H1 (cell line): ENCODE measurements at regions of chr9 and their contacts with region 1.

Region 1: DNA sequence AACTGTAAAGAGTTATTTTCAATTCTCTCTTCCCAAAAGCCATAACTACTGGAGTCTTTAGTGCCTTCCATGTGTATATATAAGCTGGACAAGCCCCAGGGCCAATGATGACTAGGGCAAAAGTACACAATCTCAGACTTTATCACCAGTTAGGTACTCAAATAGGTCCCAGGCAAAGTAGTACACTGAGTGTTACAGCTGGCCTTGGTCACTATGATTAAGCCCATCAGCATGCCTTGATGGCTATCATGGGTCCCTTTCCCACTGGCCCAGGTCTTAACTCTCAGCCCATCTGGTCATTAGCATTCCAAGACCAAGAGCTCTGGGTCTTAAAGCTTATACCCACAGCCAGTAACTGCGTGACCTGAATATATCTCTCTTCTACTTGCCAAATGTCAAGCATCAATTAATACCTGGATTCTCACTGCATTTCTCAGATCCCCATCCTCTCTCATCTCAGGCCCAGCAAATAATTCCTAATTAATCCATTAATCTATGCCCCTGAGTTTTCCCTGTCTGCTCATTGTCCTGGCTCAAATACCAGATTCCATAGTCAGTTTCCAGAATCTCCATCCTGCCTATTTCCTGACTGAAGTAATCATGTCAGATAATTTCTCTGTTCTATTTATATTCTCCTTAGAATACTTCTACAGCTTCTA is 62.3 kb downstream of the NR6A1 start:
- DNase-seq: no peak
- H3K4me3 ChIP-seq: no peak overlapping the region
- H3K27ac ChIP-seq: no peak overlapping the region
- H3K4me1 ChIP-seq: peaks cover 2 to 16% (median 7%) of the 10 kb centered on the region in 4 experiments; a peak in 5 of 7 replicates
- H3K27me3 ChIP-seq: no peaks in the 10 kb centered on the region
- CTCF ChIP-seq: no peak
- EP300 ChIP-seq: no peak
- POLR2A ChIP-seq: no peak
- RAD21 ChIP-seq: no peak

Region 2: GRCh38 chr9:124551472-124552272 is 157.1 kb before region 1 on chr9:
- CTCF ChIA-PET with region 1: interaction called, 128 read pairs
- POLR2A ChIA-PET with region 1: no interaction called
- DNase-seq: peak; percentile 56 to 78
- H3K4me3 ChIP-seq: no peak overlapping the region
- H3K27ac ChIP-seq: no peak overlapping the region
- H3K4me1 ChIP-seq: peaks cover 3 to 8% (median 5%) of the 10 kb centered on the region in 4 experiments; a peak in 5 of 7 replicates
- H3K27me3 ChIP-seq: no peaks in the 10 kb centered on the region
- CTCF ChIP-seq: peak; percentile 86 to 95 (median 93)
- EP300 ChIP-seq: no peak
- POLR2A ChIP-seq: no peak
- RAD21 ChIP-seq: peak; percentile 94 to 98

Region 3: DNA sequence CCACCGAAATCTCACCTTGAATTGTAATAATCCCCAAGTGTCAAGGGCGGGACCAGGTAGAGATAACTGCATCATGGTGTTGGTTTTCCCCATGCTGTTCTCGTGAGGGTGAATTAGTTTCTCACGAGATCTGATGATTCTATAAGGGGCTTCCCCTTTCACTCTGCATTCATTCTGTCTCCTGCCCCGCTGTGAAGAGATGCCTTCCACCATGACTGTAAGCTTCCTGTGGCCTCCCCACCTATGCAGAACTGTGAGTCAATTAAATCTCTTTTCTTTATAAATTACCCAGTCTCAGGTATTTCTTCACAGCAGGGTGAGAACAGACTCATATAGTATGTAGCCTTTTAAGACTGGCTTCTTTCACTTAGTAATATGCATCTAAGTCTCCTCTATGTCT is 73.5 kb before region 1 on chr9:
- CTCF ChIA-PET with region 1: interaction called, 13 read pairs
- POLR2A ChIA-PET with region 1: no interaction called
- DNase-seq: no peak
- H3K4me3 ChIP-seq: no peak overlapping the region
- H3K27ac ChIP-seq: no peak overlapping the region
- H3K4me1 ChIP-seq: peaks cover 0 to 3% (median 0%) of the 10 kb centered on the region in 4 experiments; a peak in 2 of 7 replicates
- H3K27me3 ChIP-seq: no peaks in the 10 kb centered on the region
- CTCF ChIP-seq: no peak
- EP300 ChIP-seq: no peak
- POLR2A ChIP-seq: no peak
- RAD21 ChIP-seq: no peak

Region 4: DNA sequence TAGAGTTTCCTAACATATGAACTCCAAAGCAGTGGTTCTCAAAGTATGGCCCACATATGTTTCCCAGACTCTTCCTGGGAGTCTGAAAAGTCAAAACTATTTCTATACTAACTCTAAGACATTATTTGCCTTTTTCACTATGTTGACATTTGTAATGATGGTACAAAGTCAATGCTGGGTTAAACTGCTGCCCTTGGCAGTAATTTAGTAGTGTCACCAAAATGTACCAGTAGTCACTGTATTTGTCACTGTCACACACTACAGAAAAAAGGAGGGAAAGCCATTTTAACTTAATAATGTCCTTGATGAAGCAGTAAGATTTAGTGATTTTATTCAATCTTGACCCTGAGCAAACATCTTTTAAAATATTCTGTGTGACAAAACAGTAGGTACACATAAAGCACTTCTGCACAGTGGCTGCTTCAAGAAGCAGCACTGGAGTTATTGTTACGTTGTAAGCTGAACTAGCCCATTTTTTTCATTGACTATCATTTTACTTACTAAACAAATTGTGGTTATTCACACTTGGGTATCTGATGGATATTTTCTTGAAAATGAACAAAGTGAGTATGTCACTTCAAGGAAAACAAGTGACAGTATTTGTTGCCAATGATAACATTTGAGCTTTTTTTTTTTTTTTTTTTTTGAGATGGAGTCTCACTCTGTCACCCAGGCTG is 27.9 kb before region 1 on chr9:
- CTCF ChIA-PET with region 1: interaction called, 16 read pairs
- POLR2A ChIA-PET with region 1: no interaction called
- DNase-seq: no peak
- H3K4me3 ChIP-seq: no peak overlapping the region
- H3K27ac ChIP-seq: no peak overlapping the region
- H3K4me1 ChIP-seq: no peaks in the 10 kb centered on the region
- H3K27me3 ChIP-seq: no peaks in the 10 kb centered on the region
- CTCF ChIP-seq: no peak
- EP300 ChIP-seq: no peak
- POLR2A ChIP-seq: no peak
- RAD21 ChIP-seq: no peak

Region 5: GRCh38 chr9:124721109-124721906 is 12.5 kb after region 1 on chr9:
- CTCF ChIA-PET with region 1: interaction called, 21 read pairs
- POLR2A ChIA-PET with region 1: interaction called, 3 read pairs
- DNase-seq: no peak
- H3K4me3 ChIP-seq: no peak overlapping the region
- H3K27ac ChIP-seq: no peak overlapping the region
- H3K4me1 ChIP-seq: peaks cover 0 to 5% (median 1%) of the 10 kb centered on the region in 4 experiments; a peak in 2 of 7 replicates
- H3K27me3 ChIP-seq: no peaks in the 10 kb centered on the region
- CTCF ChIP-seq: no peak
- EP300 ChIP-seq: no peak
- POLR2A ChIP-seq: no peak
- RAD21 ChIP-seq: no peak

Region 6: DNA sequence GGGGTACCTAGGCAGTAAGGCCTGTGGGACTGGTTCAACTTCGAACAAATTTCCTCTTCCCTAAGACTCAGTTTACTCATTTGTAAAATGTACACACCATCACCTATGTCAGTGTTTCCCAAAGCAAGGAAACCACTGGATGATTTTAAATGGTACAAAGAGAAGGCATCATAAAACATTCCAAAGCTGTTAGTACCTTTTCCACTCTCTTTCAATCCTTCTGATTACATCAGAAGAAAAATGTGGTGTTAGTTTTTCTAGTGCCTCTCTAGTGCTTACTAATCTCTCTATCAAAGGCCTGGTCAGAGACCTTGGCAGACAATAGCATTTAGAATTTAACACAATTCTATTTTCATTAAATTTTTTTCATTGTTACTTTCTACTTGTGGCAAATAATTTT is 44.2 kb after region 1 on chr9:
- CTCF ChIA-PET with region 1: interaction called, 15 read pairs
- POLR2A ChIA-PET with region 1: no interaction called
- DNase-seq: no peak
- H3K4me3 ChIP-seq: no peak overlapping the region; a peak in 1 of 8 replicates
- H3K27ac ChIP-seq: no peak overlapping the region
- H3K4me1 ChIP-seq: peaks cover 6 to 29% (median 12%) of the 10 kb centered on the region in 4 experiments
- H3K27me3 ChIP-seq: no peaks in the 10 kb centered on the region
- CTCF ChIP-seq: no peak
- EP300 ChIP-seq: no peak
- POLR2A ChIP-seq: no peak
- RAD21 ChIP-seq: no peak

Region 7: DNA sequence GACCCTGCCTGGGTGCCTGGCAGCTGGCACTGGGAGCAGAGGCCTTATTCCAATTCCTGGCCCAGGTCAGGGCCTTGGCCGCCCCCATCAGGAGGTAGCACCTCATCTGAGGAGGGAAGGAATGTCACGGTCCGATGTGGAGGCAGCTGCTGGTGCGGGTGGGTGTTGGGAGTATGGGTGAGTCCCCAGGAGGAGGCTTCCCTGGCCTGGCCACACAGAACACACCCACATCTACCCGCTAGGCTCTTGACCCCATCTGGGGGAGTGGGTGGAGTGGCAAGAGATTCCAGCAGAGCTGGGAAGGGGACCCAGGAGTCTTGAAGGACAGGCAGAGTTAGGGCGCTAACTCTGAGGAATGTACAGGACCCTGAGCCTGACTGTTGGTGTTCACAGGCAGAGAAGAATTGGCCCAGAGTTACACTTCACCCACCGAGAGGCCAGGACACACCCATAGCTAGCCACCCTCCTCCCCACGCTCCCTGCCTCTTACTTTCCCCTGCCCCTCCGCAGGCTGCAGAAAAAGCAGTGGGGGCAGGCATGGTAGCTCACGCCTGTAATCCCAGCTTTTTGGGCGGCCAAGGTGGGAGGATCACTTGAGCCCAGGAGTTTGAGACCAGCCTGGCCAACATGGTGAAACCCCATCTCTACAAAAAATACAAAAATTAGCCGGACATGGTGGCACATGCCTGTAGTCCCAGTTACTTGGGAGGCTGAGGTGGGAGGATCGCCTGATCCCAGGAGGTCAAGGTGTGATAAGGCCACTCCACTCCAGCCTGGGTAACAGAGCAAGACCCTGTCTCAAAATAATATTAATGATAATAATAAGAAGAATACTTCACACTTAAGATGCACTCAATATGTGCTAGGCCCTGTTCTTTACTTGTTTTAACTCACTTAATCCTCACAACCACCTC is 74.2 kb after region 1 on chr9:
- CTCF ChIA-PET with region 1: no interaction called
- POLR2A ChIA-PET with region 1: no interaction called
- DNase-seq: peak in 1 of 2 experiments; percentile 48
- H3K4me3 ChIP-seq: no peak overlapping the region
- H3K27ac ChIP-seq: no peak overlapping the region
- H3K4me1 ChIP-seq: peaks cover 8 to 16% (median 13%) of the 10 kb centered on the region in 4 experiments
- H3K27me3 ChIP-seq: no peaks in the 10 kb centered on the region; a peak in 1 of 7 replicates
- CTCF ChIP-seq: no peak
- EP300 ChIP-seq: no peak
- POLR2A ChIP-seq: no peak
- RAD21 ChIP-seq: no peak; a peak in 1 of 4 replicates

Region 8: DNA sequence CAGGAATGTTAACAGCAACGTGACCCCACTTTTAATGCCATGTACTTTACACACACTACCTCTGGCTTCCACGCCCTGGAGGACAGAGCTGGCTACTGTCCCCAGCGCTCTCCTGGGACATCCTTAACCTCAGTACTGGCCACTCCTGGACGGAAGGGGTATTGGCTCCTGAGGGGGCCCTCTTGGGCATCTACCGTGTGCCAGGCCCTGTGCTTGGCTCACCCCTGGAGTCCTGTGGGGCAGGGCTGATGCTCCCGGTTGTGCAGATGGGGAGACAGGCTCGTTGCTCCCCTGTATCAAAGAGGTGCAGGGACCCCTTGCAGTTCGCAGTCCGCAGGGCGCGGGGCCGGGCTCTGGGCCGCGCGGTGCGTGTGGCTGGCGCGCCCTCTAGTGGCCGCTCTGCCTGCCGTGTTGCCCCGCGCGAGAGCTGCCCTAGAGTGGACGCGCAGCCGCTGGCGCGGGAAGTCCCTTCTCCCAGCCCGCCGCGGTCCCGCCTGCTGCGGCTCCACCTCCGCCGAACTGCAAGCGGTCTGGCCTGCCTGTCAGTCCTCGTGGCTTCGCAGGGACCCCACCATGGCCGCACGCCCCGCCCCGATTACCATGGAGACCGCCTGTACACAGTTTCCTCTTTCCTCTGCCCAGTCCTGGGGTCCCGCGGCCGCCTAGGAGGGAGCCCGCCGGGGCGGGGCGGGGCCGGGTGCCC is 144.2 kb after region 1 on chr9 and contains the start of gene WDR38:
- CTCF ChIA-PET with region 1: interaction called, 12 read pairs
- POLR2A ChIA-PET with region 1: no interaction called
- DNase-seq: peak in 1 of 2 experiments; percentile 92
- H3K4me3 ChIP-seq: peak within 1 kb of the TSS; percentile 25 to 61 (median 48)
- H3K27ac ChIP-seq: no peak within 1 kb of the TSS
- H3K4me1 ChIP-seq: 0 out of 7 replicates have a peak, but pooled peaks cover 0 to 3% (median under 1%) of the 10 kb centered on the region in 4 experiments
- H3K27me3 ChIP-seq: no peaks in the 10 kb centered on the region
- CTCF ChIP-seq: peak in 2 of 3 experiments; percentile 73 to 91; a peak in 3 of 4 replicates
- EP300 ChIP-seq: no peak
- POLR2A ChIP-seq: no peak
- RAD21 ChIP-seq: peak; percentile 74 to 77
- total RNA-seq, gene WDR38: not detected in 2 replicates

Region 9: GRCh38 chr9:125028038-125028437 is 319.3 kb after region 1 on chr9:
- CTCF ChIA-PET with region 1: no interaction called
- POLR2A ChIA-PET with region 1: no interaction called
- DNase-seq: no peak
- H3K4me3 ChIP-seq: no peak overlapping the region
- H3K27ac ChIP-seq: no peak overlapping the region
- H3K4me1 ChIP-seq: no peaks in the 10 kb centered on the region
- H3K27me3 ChIP-seq: no peaks in the 10 kb centered on the region
- CTCF ChIP-seq: no peak
- EP300 ChIP-seq: no peak
- POLR2A ChIP-seq: no peak
- RAD21 ChIP-seq: no peak